CD4-positive, alpha-beta T cell (primary cell): ENCODE measurements at regions of chr6 and their contacts with region 1.

Region 1: DNA sequence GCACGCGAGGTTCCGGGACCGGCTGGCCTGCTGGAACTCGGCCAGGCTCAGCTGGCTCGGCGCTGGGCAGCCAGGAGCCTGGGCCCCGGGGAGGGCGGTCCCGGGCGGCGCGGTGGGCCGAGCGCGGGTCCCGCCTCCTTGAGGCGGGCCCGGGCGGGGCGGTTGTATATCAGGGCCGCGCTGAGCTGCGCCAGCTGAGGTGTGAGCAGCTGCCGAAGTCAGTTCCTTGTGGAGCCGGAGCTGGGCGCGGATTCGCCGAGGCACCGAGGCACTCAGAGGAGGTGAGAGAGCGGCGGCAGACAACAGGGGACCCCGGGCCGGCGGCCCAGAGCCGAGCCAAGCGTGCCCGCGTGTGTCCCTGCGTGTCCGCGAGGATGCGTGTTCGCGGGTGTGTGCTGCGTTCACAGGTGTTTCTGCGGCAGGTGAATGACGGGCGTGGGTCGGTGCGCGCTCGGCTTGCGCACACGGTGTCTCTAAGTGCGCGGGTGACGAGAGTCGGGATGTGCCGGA is at the start of gene CDKN1A:
- DNase-seq: peak; percentile 46 to 90 (median 63)
- ATAC-seq: peak; percentile 39
- H3K4me3 ChIP-seq: peak within 1 kb of the TSS; percentile 87
- H3K4me3 Mint-ChIP-seq: peak within 1 kb of the TSS; percentile 93
- H3K27ac ChIP-seq: peak within 1 kb of the TSS; percentile 35 to 66
- H3K27ac Mint-ChIP-seq: peak within 1 kb of the TSS; percentile 94
- H3K4me1 ChIP-seq: peaks cover 62% of the 10 kb centered on the region
- H3K4me1 Mint-ChIP-seq: peaks cover 45% of the 10 kb centered on the region
- H3K27me3 ChIP-seq: peaks cover 0 to 2% of the 10 kb centered on the region in 2 experiments
- H3K27me3 Mint-ChIP-seq: peaks cover 8% of the 10 kb centered on the region
- CTCF ChIP-seq: no peak
- total RNA-seq, gene CDKN1A: 98.3 to 98.6 TPM

Region 2: DNA sequence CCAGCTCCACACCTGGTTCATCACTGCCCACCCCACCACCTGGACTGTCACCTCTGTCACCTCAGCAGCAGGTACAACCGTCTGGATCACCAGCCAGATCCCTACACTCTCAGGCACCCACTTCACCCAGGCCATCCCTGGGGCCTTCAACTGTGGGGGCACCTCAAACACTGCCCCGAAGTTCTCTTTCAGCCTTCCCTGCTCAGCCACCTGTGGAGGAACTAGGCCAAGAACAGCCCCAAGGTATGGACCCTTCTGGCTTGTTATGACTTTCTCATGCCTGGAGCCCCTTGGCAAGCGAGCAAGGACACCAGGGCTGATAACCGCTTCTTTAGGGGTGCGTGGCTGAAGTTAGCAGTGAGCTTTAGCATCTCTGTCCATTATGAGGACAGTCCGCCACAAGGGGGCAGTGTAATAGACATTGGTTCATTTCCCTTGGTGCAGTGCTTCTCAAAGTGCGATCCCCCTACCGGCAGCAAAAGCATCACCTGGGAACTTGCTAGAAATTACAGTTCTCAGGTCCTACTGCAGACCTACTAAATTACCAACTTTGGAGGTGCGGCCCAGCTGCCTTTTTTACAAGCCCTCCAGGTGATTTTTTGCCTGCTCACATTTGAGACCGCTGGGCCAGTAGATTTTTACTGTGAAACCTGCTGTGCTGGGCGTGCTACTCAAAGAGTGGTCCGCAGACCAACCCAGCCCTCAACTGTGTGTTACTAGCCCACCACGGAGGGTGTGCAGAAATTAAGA is 376.2 kb before region 1 on chr6:
- CTCF ChIA-PET with region 1: no interaction called
- POLR2A ChIA-PET with region 1: no interaction called
- intact Hi-C with region 1: loop called in 1 of 2 experiments (anchors 5 kb)
- DNase-seq: peak; percentile 78 to 97 (median 92)
- ATAC-seq: peak; percentile 99
- H3K4me3 ChIP-seq: no peak overlapping the region
- H3K4me3 Mint-ChIP-seq: no peak overlapping the region
- H3K27ac ChIP-seq: no peak overlapping the region
- H3K27ac Mint-ChIP-seq: no peak overlapping the region
- H3K4me1 ChIP-seq: peaks cover 8% of the 10 kb centered on the region
- H3K4me1 Mint-ChIP-seq: peaks cover 7% of the 10 kb centered on the region
- H3K27me3 ChIP-seq: no peaks in the 10 kb centered on the region
- H3K27me3 Mint-ChIP-seq: peaks cover 16% of the 10 kb centered on the region
- CTCF ChIP-seq: peak; percentile 99

Region 3: DNA sequence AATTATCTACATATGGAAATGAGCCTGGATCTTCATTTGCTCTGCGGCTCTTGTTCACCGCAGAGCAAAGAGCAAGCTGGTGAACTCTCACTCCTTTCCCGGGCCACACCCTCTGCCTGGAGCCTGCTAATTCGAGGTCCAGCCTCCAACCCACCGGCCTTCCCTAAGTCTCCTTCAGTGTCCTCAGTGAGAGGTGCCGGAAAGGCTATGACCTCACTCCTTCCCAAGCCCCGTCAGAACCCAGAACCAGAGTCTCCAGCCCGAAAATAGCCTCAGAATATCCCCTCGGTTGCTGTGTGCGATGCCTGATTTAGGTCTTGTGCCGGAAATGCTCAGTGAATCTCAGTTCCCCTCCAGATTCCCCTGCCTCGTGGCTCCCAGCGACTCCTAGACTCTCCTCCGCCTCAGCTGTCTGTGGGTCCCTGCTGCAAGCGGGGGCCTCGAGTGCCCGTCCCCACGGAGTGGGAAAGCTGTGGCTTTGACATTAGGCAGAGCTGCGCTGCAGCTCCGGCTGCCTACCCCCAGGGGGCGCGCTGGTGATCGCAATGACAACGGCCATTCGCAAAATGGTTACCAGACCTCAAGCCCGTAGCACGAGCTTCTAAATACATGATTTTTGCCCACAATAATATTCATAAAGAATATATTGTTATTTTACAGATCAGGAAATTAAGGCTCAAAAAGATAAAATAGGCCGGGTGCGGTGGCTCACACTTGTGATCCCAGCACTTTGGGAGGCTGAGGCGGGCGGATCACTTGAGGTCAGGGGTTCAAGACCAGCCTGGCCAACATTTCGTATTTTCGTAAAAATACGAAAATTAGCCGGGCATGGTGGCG is 337.7 kb before region 1 on chr6:
- CTCF ChIA-PET with region 1: no interaction called
- POLR2A ChIA-PET with region 1: no interaction called
- intact Hi-C with region 1: loop called in 1 of 2 experiments (anchors 5 kb)
- DNase-seq: peak; percentile 46 to 83 (median 66)
- ATAC-seq: peak; percentile 91
- H3K4me3 ChIP-seq: peak overlapping the region; percentile 10
- H3K4me3 Mint-ChIP-seq: peak overlapping the region; percentile 68
- H3K27ac ChIP-seq: no peak overlapping the region
- H3K27ac Mint-ChIP-seq: no peak overlapping the region
- H3K4me1 ChIP-seq: peaks cover 20% of the 10 kb centered on the region
- H3K4me1 Mint-ChIP-seq: peaks cover 10% of the 10 kb centered on the region
- H3K27me3 ChIP-seq: peaks cover 5 to 14% of the 10 kb centered on the region in 2 experiments
- H3K27me3 Mint-ChIP-seq: peaks cover 22% of the 10 kb centered on the region
- CTCF ChIP-seq: peak; percentile 88

Region 4: GRCh38 chr6:36360241-36361054 is 318.1 kb before region 1 on chr6:
- CTCF ChIA-PET with region 1: no interaction called
- POLR2A ChIA-PET with region 1: no interaction called
- intact Hi-C with region 1: no loop called
- DNase-seq: peak; percentile 52 to 85 (median 58)
- ATAC-seq: peak; percentile 98
- H3K4me3 ChIP-seq: no peak overlapping the region
- H3K4me3 Mint-ChIP-seq: no peak overlapping the region
- H3K27ac ChIP-seq: no peak overlapping the region
- H3K27ac Mint-ChIP-seq: no peak overlapping the region
- H3K4me1 ChIP-seq: peaks cover 7% of the 10 kb centered on the region
- H3K4me1 Mint-ChIP-seq: no peaks in the 10 kb centered on the region
- H3K27me3 ChIP-seq: no peaks in the 10 kb centered on the region
- H3K27me3 Mint-ChIP-seq: no peaks in the 10 kb centered on the region
- CTCF ChIP-seq: peak; percentile 75

Region 5: DNA sequence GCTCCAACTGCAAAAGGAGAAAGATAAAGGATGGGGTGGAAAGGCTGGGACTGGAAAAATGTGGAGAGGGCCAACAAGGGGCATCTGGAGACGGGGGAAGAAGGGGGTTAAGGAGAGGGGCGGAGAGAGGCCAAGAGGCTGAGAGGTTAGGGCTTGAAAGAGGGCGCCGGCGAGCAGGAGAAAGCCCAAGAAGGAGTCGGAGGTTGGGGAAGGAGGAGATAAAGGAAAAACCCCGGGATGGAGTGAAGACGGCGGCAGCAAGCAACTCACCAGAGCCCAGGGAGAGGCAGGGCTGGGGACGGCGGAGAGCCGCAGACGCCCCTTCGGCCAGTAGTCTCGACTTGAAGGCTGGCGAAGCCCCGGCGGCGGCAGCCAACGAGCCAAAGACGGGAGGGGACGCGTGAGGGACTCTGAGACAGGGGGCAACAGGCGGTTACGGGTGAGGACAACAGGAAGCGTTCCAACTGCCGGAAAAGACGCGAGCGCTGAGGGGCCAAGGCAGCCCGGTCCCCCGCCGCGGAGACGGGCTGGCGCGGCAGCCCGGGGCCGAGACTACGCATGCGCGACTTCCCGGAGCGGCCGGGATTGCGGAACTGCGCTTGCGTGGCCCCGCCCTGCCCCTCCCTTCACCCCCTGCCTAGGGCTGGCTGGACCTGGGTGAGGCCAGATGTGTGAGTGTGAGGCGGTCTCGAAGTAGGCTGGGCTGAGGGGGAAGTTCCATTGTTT is 131.5 kb before region 1 on chr6 and contains the start of gene STK38:
- CTCF ChIA-PET with region 1: no interaction called
- POLR2A ChIA-PET with region 1: no interaction called
- intact Hi-C with region 1: loop called in 1 of 2 experiments (anchors 10 kb)
- DNase-seq: peak; percentile 85 to 96 (median 92)
- ATAC-seq: peak; percentile 67
- H3K4me3 ChIP-seq: peak within 1 kb of the TSS; percentile 97
- H3K4me3 Mint-ChIP-seq: peak within 1 kb of the TSS; percentile 98
- H3K27ac ChIP-seq: peak within 1 kb of the TSS; percentile 90 to 98
- H3K27ac Mint-ChIP-seq: peak within 1 kb of the TSS; percentile 96
- H3K4me1 ChIP-seq: peaks cover 42% of the 10 kb centered on the region
- H3K4me1 Mint-ChIP-seq: peaks cover 54% of the 10 kb centered on the region
- H3K27me3 ChIP-seq: no peaks in the 10 kb centered on the region
- H3K27me3 Mint-ChIP-seq: no peaks in the 10 kb centered on the region
- CTCF ChIP-seq: no peak
- total RNA-seq, gene STK38: 47.0 to 48.4 TPM

Region 6: DNA sequence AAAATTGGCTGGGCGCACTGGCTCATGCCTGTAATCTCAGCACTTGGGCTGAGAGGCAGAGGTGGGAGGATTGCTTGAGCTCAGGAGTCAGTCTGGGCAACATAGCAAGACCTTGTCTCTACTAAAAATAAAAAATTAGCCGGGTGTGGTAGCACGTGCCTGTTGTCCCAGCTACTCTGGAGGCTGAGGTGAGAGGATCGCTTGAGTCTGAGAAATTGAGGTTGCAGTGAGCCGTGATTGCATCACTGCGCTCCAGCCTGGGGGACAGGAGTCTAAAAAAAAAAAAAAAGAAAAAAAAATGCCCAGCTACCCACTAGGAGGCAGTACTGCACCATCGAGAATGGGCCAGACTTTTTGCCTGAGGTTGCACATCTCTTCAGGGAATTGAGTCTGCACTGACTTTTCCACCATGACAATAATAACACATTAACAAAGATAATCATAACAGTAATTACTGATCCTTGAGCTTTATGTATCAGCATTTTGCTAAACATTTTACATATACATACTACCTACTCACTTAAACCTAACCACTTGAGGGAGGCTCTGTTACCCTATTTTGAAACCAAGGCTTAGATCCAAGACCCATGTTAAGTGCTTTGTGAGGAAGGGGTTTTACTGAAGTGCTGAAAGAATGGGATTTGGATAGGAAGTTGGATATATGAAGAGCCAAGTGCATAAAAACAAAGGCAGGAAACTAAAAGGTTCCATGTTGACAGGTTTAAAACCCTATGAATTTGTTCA is 63.4 kb before region 1 on chr6:
- CTCF ChIA-PET with region 1: interaction called, 13 read pairs
- POLR2A ChIA-PET with region 1: interaction called, 7 read pairs
- intact Hi-C with region 1: loop called (anchors 1 to 2 kb)
- DNase-seq: peak in 9 of 14 experiments; percentile 17 to 82 (median 32)
- ATAC-seq: peak; percentile 85
- H3K4me3 ChIP-seq: no peak overlapping the region
- H3K4me3 Mint-ChIP-seq: no peak overlapping the region
- H3K27ac ChIP-seq: no peak overlapping the region
- H3K27ac Mint-ChIP-seq: peak overlapping the region; percentile 66
- H3K4me1 ChIP-seq: peaks cover 9% of the 10 kb centered on the region
- H3K4me1 Mint-ChIP-seq: peaks cover 21% of the 10 kb centered on the region
- H3K27me3 ChIP-seq: no peaks in the 10 kb centered on the region
- H3K27me3 Mint-ChIP-seq: no peaks in the 10 kb centered on the region
- CTCF ChIP-seq: peak; percentile 74

Region 7: GRCh38 chr6:36623547-36624459 is 54.8 kb before region 1 on chr6:
- CTCF ChIA-PET with region 1: interaction called, 9 read pairs
- POLR2A ChIA-PET with region 1: no interaction called
- intact Hi-C with region 1: loop called (anchors 1 kb)
- DNase-seq: peak; percentile 65 to 88 (median 74)
- ATAC-seq: peak; percentile 94
- H3K4me3 ChIP-seq: no peak overlapping the region
- H3K4me3 Mint-ChIP-seq: no peak overlapping the region
- H3K27ac ChIP-seq: no peak overlapping the region
- H3K27ac Mint-ChIP-seq: no peak overlapping the region
- H3K4me1 ChIP-seq: peaks cover 12% of the 10 kb centered on the region
- H3K4me1 Mint-ChIP-seq: peaks cover 6% of the 10 kb centered on the region
- H3K27me3 ChIP-seq: no peaks in the 10 kb centered on the region
- H3K27me3 Mint-ChIP-seq: no peaks in the 10 kb centered on the region
- CTCF ChIP-seq: peak; percentile 83

Region 8: GRCh38 chr6:36759148-36759759 is 80.7 kb after region 1 on chr6:
- CTCF ChIA-PET with region 1: interaction called, 22 read pairs
- POLR2A ChIA-PET with region 1: no interaction called
- intact Hi-C with region 1: loop called (anchors 2 to 5 kb)
- DNase-seq: peak; percentile 58 to 88 (median 76)
- ATAC-seq: peak; percentile 53
- H3K4me3 ChIP-seq: no peak overlapping the region
- H3K4me3 Mint-ChIP-seq: no peak overlapping the region
- H3K27ac ChIP-seq: no peak overlapping the region
- H3K27ac Mint-ChIP-seq: no peak overlapping the region
- H3K4me1 ChIP-seq: peaks cover 49% of the 10 kb centered on the region
- H3K4me1 Mint-ChIP-seq: peaks cover 46% of the 10 kb centered on the region
- H3K27me3 ChIP-seq: no peaks in the 10 kb centered on the region
- H3K27me3 Mint-ChIP-seq: no peaks in the 10 kb centered on the region
- CTCF ChIP-seq: peak; percentile 98